ENCODE measurements at regions of chr10 and their contacts with region 1.

Region 1: DNA sequence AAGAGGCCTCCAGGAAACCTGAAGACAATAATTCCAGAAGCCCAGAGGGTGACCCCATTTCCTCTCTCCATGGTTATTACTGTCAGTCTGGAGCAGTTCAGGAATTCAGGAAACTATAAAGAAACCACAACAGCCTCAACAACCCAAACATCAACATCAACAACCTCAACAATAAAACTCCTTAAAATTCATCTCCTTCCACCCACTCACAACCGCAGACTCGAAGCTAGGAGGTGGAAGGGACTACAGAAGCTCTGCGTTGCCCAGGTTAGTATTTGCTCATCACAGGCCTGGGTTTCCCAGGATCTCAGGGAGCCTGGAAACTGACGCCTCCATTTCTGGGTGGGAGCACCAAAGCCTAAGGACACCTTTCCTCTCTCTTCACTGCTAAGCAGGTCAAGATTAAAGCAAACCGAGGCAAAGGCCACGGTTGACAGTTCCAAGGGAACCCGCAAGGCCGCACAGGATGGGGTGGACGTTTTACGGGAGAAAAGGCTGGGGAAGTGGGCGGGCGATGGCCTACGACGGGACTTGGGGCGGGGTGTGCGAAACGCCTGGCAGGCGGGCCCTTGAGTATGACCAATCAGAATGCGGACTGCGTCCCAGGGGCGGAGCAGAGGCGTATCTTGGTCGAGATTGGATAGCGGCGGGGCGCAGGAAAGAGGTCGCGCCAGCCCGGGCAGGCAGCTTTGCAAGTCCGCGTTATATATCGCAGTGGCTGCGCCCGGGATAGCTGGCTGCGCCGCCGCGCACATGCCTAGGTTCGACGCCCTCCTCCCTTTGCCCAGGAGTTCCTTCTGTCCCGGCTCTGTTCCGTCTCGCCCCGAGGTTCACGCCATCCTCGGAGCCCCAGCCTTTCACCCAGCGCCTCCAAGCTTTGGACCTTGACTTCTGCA is at the start of gene ELOVL3:
- DNase-seq: peak; percentile 91
- ATAC-seq: peak; percentile 91
- H3K4me3 Mint-ChIP-seq: peak within 1 kb of the TSS; percentile 37
- H3K27ac Mint-ChIP-seq: no peak within 1 kb of the TSS
- H3K4me1 Mint-ChIP-seq: peaks cover 16% of the 10 kb centered on the region
- H3K27me3 Mint-ChIP-seq: peaks cover 43% of the 10 kb centered on the region
- CTCF ChIP-seq: no peak
- total RNA-seq, gene ELOVL3: not detected

Region 2: DNA sequence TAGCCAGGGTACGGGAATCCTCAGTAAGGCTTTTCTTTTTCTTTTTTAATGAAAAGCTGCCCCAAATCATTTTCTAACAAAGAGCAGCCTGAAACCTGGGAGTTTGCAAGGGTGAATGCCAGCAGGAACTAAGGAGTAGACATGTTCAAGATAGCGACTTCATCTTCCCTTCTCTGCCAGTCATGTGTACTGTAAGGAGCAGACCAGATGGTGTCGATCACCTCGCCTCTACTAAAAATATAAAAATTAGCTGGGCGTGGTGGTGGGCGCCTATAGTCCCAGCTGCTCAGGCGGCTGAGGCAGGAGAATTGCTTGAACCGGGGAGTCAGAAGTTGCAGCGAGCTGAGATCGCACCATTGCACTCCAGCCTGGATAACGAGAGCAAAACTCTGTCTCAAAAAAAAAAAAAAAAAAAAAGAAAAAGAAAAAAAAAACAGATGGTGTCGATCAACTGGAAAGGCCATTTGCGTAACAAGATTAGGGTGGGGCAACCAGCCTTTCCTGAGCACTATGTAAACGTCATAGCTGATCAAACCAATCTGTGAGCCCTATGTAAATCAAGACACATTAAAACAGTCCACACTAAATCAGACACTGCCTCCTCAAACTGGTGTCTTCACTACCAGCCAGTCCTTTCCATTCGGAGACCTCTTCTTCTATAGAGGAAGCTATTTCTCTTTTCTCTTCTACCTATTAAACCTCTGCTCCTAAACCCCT is 39.9 kb before region 1 on chr10:
- CTCF ChIA-PET with region 1: interaction called, 25 read pairs
- POLR2A ChIA-PET with region 1: no interaction called
- intact Hi-C with region 1: no loop called
- DNase-seq: no peak
- ATAC-seq: no peak
- H3K4me3 Mint-ChIP-seq: no peak overlapping the region
- H3K27ac Mint-ChIP-seq: no peak overlapping the region
- H3K4me1 Mint-ChIP-seq: peaks cover 12% of the 10 kb centered on the region
- H3K27me3 Mint-ChIP-seq: no peaks in the 10 kb centered on the region
- CTCF ChIP-seq: no peak

Region 3: GRCh38 chr10:102283488-102283887 is 57.6 kb after region 1 on chr10:
- CTCF ChIA-PET with region 1: interaction called, 17 read pairs
- POLR2A ChIA-PET with region 1: no interaction called
- intact Hi-C with region 1: no loop called
- DNase-seq: no peak
- ATAC-seq: no peak
- H3K4me3 Mint-ChIP-seq: no peak overlapping the region
- H3K27ac Mint-ChIP-seq: peak overlapping the region; percentile 72
- H3K4me1 Mint-ChIP-seq: peaks cover 75% of the 10 kb centered on the region
- H3K27me3 Mint-ChIP-seq: no peaks in the 10 kb centered on the region
- CTCF ChIP-seq: no peak

Region 4: GRCh38 chr10:102322914-102323313 is 97.0 kb after region 1 on chr10:
- CTCF ChIA-PET with region 1: interaction called, 34 read pairs
- POLR2A ChIA-PET with region 1: no interaction called
- intact Hi-C with region 1: no loop called
- DNase-seq: peak; percentile 64
- ATAC-seq: peak; percentile 39
- H3K4me3 Mint-ChIP-seq: no peak overlapping the region
- H3K27ac Mint-ChIP-seq: no peak overlapping the region
- H3K4me1 Mint-ChIP-seq: peaks cover 17% of the 10 kb centered on the region
- H3K27me3 Mint-ChIP-seq: no peaks in the 10 kb centered on the region
- CTCF ChIP-seq: no peak

Region 5: GRCh38 chr10:102375250-102375649 is 149.4 kb after region 1 on chr10:
- CTCF ChIA-PET with region 1: interaction called, 24 read pairs
- POLR2A ChIA-PET with region 1: interaction called, 3 read pairs
- intact Hi-C with region 1: no loop called
- DNase-seq: no peak
- ATAC-seq: no peak
- H3K4me3 Mint-ChIP-seq: no peak overlapping the region
- H3K27ac Mint-ChIP-seq: no peak overlapping the region
- H3K4me1 Mint-ChIP-seq: no peaks in the 10 kb centered on the region
- H3K27me3 Mint-ChIP-seq: no peaks in the 10 kb centered on the region
- CTCF ChIP-seq: no peak

Region 6: DNA sequence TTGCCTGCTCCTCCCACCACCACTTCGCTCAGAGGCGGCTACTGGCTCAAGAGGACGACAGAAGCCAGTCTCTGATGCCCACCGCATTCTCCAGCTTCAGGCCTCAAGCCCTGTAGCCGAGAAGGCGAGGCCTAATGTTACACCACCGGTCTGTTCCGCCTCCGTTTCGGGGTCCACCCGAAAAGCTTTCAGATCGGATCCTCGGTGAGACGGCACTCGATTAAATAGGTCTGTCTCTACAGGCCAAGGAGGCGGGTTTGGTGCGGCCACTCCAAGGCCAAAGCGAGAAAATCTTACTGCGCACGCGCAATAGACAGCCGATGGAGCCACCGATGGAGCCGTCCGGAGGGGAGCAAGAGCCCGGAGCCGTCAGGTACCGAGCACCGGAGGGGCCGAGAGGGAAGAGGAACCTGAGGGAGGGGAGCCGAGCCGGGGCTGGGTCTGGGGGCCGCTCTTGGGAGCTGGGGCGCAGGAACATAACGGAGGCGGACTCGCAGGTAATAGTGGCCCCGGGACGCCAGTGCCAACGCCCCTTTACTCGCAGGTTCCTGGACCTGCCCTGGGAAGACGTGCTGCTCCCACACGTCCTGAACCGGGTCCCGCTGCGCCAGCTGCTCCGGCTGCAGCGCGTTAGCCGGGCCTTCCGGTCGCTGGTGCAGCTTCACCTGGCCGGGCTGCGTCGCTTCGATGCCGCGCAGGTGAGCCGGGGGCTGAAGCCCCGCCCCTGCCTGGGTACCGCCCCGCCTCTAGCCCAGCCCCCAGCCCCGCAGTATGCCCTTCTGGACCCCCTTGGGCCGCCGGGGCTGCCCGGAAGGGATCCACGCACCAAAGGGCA is 195.1 kb after region 1 on chr10 and contains the start of gene FBXL15:
- CTCF ChIA-PET with region 1: interaction called, 39 read pairs
- POLR2A ChIA-PET with region 1: no interaction called
- intact Hi-C with region 1: no loop called
- DNase-seq: peak; percentile 98
- ATAC-seq: peak; percentile 85
- H3K4me3 Mint-ChIP-seq: peak within 1 kb of the TSS; percentile 87
- H3K27ac Mint-ChIP-seq: peak within 1 kb of the TSS; percentile 91
- H3K4me1 Mint-ChIP-seq: peaks cover 27% of the 10 kb centered on the region
- H3K27me3 Mint-ChIP-seq: peaks cover 14% of the 10 kb centered on the region
- CTCF ChIP-seq: no peak
- total RNA-seq, gene FBXL15: 14.1 to 15.7 TPM

Region 7: GRCh38 chr10:102583435-102584417 is 357.8 kb after region 1 on chr10:
- CTCF ChIA-PET with region 1: interaction called, 29 read pairs
- POLR2A ChIA-PET with region 1: no interaction called
- intact Hi-C with region 1: loop called (anchors 10 kb)
- DNase-seq: peak; percentile 92
- ATAC-seq: peak; percentile 99
- H3K4me3 Mint-ChIP-seq: no peak overlapping the region
- H3K27ac Mint-ChIP-seq: no peak overlapping the region
- H3K4me1 Mint-ChIP-seq: peaks cover 4% of the 10 kb centered on the region
- H3K27me3 Mint-ChIP-seq: no peaks in the 10 kb centered on the region
- CTCF ChIP-seq: peak; percentile 91

Measured in activated CD8-positive, alpha-beta T cell treated with anti-CD3 and anti-CD28 coated beads for 36 hours (primary cell).